Activated B cell treated with CpG ODN at 0.5 μM for 24 hours (primary cell): ENCODE measurements at regions of chr6 and their contacts with region 1.

Region 1: DNA sequence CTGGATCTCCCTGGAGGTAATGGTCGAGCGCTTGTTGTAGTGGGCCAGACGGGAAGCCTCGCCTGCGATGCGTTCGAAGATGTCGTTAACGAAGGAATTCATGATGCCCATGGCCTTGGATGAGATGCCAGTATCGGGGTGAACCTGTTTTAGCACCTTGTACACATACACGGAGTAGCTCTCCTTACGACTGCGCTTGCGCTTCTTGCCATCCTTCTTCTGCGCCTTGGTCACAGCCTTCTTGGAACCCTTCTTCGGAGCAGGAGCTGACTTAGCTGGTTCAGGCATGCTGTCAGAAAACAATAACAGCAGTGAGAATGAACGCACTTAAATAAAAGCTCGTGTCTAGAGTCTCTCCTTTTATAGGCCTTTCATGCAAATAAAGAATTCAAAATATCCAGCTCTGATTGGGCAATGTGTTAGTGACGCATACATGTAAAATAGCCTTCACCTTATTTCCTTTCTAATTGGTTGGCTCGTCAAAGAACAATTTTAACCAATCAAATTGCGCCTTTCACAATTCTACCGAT is 129.2 kb downstream of the HFE start:
- DNase-seq: peak; percentile 62
- ATAC-seq: peak; percentile 78
- H3K4me3 Mint-ChIP-seq: no peak overlapping the region
- H3K27ac Mint-ChIP-seq: no peak overlapping the region
- H3K4me1 Mint-ChIP-seq: peaks cover 12% of the 10 kb centered on the region
- H3K27me3 Mint-ChIP-seq: no peaks in the 10 kb centered on the region
- CTCF ChIP-seq: no peak

Region 2: GRCh38 chr6:26045065-26045927 is 171.1 kb before region 1 on chr6:
- CTCF ChIA-PET with region 1: no interaction called
- POLR2A ChIA-PET with region 1: interaction called, 41 read pairs
- intact Hi-C with region 1: no loop called
- DNase-seq: peak; percentile 51
- ATAC-seq: peak; percentile 58
- H3K4me3 Mint-ChIP-seq: peak overlapping the region; percentile 91
- H3K27ac Mint-ChIP-seq: peak overlapping the region; percentile 99
- H3K4me1 Mint-ChIP-seq: peaks cover 24% of the 10 kb centered on the region
- H3K27me3 Mint-ChIP-seq: no peaks in the 10 kb centered on the region
- CTCF ChIP-seq: no peak

Region 3: GRCh38 chr6:26196846-26197648 is 19.4 kb before region 1 on chr6:
- CTCF ChIA-PET with region 1: interaction called, 5 read pairs
- POLR2A ChIA-PET with region 1: interaction called, 540 read pairs
- intact Hi-C with region 1: loop called (anchors 1 kb)
- DNase-seq: peak; percentile 63
- ATAC-seq: peak; percentile 53
- H3K4me3 Mint-ChIP-seq: peak overlapping the region; percentile 93
- H3K27ac Mint-ChIP-seq: peak overlapping the region; percentile 96
- H3K4me1 Mint-ChIP-seq: peaks cover 52% of the 10 kb centered on the region
- H3K27me3 Mint-ChIP-seq: no peaks in the 10 kb centered on the region
- CTCF ChIP-seq: no peak

Region 4: GRCh38 chr6:26304797-26305640 is 88.6 kb after region 1 on chr6:
- CTCF ChIA-PET with region 1: no interaction called
- POLR2A ChIA-PET with region 1: interaction called, 4 read pairs
- intact Hi-C with region 1: loop called (anchors 2 kb)
- DNase-seq: peak; percentile 39
- ATAC-seq: peak; percentile 87
- H3K4me3 Mint-ChIP-seq: peak overlapping the region; percentile 93
- H3K27ac Mint-ChIP-seq: peak overlapping the region; percentile 96
- H3K4me1 Mint-ChIP-seq: peaks cover 17% of the 10 kb centered on the region
- H3K27me3 Mint-ChIP-seq: no peaks in the 10 kb centered on the region
- CTCF ChIP-seq: no peak

Region 5: GRCh38 chr6:26568601-26569432 is 352.4 kb after region 1 on chr6:
- CTCF ChIA-PET with region 1: no interaction called
- POLR2A ChIA-PET with region 1: interaction called, 12 read pairs
- intact Hi-C with region 1: no loop called
- DNase-seq: peak; percentile 98
- ATAC-seq: peak; percentile 80
- H3K4me3 Mint-ChIP-seq: peak overlapping the region; percentile 96
- H3K27ac Mint-ChIP-seq: peak overlapping the region; percentile 98
- H3K4me1 Mint-ChIP-seq: peaks cover 26% of the 10 kb centered on the region
- H3K27me3 Mint-ChIP-seq: peaks cover 3% of the 10 kb centered on the region
- CTCF ChIP-seq: no peak

Region 6: GRCh38 chr6:27177485-27178406 is 961.3 kb after region 1 on chr6:
- CTCF ChIA-PET with region 1: no interaction called
- POLR2A ChIA-PET with region 1: no interaction called
- intact Hi-C with region 1: no loop called
- DNase-seq: peak; percentile 64
- ATAC-seq: peak; percentile 82
- H3K4me3 Mint-ChIP-seq: peak overlapping the region; percentile 98
- H3K27ac Mint-ChIP-seq: peak overlapping the region; percentile 92
- H3K4me1 Mint-ChIP-seq: peaks cover 12% of the 10 kb centered on the region
- H3K27me3 Mint-ChIP-seq: peaks cover 5% of the 10 kb centered on the region
- CTCF ChIP-seq: no peak

Region 7: DNA sequence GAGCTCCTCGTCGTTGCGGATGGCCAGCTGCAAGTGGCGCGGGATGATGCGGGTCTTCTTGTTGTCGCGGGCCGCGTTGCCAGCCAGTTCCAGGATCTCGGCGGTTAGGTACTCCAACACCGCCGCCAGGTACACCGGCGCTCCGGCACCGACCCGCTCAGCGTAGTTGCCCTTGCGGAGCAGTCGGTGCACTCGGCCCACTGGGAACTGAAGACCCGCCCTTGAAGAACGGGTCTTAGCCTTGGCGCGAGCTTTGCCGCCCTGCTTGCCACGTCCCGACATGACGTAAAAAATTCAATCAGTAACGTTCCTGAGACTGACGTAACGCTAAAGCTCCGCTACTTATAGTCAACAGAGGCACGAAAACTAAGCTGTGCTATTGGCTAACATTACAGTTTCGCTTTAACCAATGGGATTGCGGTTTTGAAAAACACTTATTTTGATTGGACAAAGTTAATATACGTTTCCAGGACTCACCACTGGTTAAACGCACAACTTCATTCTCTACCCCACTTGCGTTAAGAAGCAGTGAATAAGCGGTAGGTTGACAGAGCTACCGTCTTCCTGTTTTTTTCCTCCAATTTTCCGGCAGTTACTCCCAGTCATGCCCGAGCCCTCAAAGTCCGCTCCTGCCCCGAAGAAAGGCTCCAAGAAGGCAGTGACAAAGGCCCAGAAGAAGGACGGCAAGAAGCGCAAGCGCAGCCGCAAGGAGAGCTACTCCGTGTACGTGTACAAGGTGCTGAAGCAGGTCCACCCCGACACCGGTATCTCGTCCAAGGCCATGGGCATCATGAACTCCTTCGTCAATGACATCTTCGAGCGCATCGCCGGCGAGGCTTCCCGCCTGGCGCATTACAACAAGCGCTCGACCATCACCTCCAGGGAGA is 1621.9 kb after region 1 on chr6:
- CTCF ChIA-PET with region 1: no interaction called
- POLR2A ChIA-PET with region 1: interaction called, 21 read pairs
- intact Hi-C with region 1: no loop called
- DNase-seq: peak; percentile 73
- ATAC-seq: peak; percentile 76
- H3K4me3 Mint-ChIP-seq: no peak overlapping the region
- H3K27ac Mint-ChIP-seq: no peak overlapping the region
- H3K4me1 Mint-ChIP-seq: peaks cover 18% of the 10 kb centered on the region
- H3K27me3 Mint-ChIP-seq: no peaks in the 10 kb centered on the region
- CTCF ChIP-seq: no peak